WTC11 (cell line): ENCODE measurements at regions of chr2 and their contacts with region 1.

Region 1: DNA sequence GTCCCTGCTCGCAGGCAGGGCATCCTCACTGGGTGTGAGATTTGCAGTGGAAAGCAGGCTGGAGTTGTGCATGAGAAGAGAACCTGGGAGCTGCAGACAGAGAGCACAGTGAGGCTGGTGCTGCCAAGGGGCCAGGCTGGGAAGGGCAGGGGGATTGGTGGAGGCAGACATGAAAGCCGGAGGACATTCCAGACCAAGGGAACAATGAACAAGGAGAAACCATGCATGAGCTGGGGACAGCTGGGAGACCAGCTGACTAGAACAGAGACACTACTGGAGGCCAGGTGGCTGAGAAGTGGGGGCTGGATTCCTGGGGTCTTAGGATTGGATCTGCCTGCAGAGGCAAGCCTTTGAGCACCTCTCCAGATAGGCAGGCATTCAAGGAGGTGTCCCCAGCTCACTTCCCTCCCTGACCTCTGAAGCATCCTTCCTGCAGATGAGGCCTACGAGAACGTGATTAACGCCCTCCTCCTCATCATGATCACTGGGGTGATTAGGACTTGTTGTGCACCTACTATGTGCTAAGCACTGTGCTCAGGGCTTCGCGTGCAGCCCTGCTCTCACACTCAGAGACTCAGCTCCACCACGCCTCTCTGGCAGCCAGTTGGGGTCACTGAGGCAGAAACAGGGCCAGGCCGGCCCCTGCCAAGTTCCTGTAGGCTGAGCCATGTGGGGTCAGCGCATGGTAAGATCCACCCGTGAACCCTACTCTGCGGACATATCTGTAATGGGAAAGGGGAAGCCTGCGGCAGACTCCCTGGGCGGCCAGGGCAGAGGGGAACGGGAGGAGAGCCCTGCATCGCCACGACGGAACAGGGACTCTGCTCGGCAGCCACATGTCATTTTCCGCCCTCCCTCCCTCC is 74.8 kb upstream of the SLC66A3 start:
- DNase-seq: no peak
- ATAC-seq: peak; percentile 63
- H3K4me3 Mint-ChIP-seq: no peak overlapping the region
- H3K27ac Mint-ChIP-seq: no peak overlapping the region
- H3K4me1 Mint-ChIP-seq: no peaks in the 10 kb centered on the region; the same call in 1 of the 2 replicates
- H3K27me3 Mint-ChIP-seq: no peaks in the 10 kb centered on the region
- CTCF ChIP-seq: no peak

Region 2: DNA sequence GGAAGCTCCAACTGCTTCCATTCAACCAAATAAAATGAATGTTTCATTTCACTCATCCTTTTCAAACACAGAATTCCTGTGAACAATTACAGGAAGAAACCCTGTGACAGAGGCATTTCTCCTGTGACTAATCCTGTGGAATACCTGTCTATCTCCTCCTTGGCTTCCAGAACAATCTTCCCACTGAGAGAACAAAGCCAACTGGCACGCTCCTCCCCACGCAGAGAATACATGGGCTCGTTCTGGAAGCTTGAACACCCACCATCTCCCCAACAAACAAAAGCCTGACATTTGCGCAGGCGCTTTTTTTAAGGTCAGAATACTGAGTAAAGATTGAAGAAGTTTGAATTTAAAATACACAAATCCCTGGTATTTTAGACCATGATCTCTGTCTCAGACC is 29.9 kb before region 1 on chr2:
- CTCF ChIA-PET with region 1: no interaction called
- POLR2A ChIA-PET with region 1: no interaction called
- DNase-seq: no peak
- ATAC-seq: no peak
- H3K4me3 Mint-ChIP-seq: no peak overlapping the region
- H3K27ac Mint-ChIP-seq: no peak overlapping the region
- H3K4me1 Mint-ChIP-seq: no peaks in the 10 kb centered on the region
- H3K27me3 Mint-ChIP-seq: no peaks in the 10 kb centered on the region
- CTCF ChIP-seq: no peak

Region 3: DNA sequence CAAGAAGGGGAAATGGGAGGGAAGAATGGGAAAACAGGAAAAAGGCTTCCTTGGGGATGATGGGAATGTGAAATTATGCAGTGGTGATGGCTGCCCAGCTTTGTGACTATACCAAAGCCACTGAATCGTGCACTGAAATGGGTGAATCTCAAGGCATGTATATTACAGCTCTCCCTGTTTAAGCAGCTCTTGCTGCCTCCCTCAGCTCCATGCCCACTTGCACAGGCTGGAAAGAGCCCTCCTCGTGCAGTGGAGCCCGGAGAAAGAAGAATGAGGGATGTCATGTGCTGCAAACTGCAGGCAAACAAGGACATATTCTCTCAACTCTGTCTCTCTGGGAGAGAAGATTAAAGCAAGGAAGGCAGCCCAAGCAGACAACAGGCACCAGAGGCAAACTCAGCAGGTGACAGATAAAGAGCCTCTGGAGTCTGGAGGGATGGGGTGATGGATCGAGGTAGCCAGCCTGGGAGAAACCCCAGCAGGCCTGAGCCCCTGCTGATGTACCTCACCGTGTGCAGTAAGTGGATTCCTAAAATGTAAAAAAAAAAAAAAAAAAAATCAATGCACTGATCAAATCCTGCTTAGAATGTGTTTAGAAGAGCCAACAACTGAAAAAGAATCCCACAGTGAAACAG is 12.3 kb after region 1 on chr2:
- CTCF ChIA-PET with region 1: interaction called, 10 read pairs
- POLR2A ChIA-PET with region 1: no interaction called
- DNase-seq: no peak
- ATAC-seq: no peak
- H3K4me3 Mint-ChIP-seq: no peak overlapping the region
- H3K27ac Mint-ChIP-seq: no peak overlapping the region; the same call in 1 of the 2 replicates
- H3K4me1 Mint-ChIP-seq: no peaks in the 10 kb centered on the region
- H3K27me3 Mint-ChIP-seq: no peaks in the 10 kb centered on the region
- CTCF ChIP-seq: no peak

Region 4: GRCh38 chr2:11103984-11104793 is 23.7 kb after region 1 on chr2:
- CTCF ChIA-PET with region 1: no interaction called
- POLR2A ChIA-PET with region 1: no interaction called
- DNase-seq: no peak
- ATAC-seq: no peak
- H3K4me3 Mint-ChIP-seq: no peak overlapping the region
- H3K27ac Mint-ChIP-seq: no peak overlapping the region
- H3K4me1 Mint-ChIP-seq: no peaks in the 10 kb centered on the region
- H3K27me3 Mint-ChIP-seq: no peaks in the 10 kb centered on the region
- CTCF ChIP-seq: no peak